Right ventricle myocardium superior (tissue), 1 donor: ENCODE measurements at regions of chr5 and their contacts with region 1.

Region 1: DNA sequence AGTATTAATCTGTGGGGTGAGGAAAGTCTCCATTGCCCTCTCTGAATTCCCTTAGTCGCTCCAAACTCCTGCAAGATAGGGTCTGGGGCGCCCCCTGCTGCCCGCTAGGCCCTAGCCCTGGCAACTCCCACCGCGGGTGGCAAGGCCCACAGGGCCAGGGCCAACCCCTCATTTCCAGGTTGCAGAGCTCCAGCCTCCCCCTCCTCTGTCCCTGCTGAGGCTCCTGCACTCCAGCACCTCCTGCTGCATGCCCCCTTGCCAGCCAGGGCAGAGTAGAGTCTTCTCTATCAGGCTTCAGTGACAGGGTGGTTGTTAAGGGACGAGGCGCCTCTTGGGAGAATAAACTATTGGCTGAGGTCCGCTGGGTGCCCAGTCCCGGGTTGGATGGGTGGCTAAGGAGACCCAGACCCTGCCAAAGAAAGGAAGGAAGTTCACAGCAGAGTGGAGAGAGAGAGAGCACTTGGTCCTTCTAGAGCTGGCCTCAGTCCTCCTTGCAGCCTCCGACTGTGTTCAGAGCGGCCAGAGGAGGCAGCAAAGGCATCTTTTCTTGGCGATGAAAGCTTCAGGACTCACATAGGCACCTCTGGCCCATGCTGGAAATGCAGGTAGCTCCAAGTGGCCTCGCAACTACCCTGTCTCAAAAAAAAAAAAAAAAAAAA is 45.6 kb downstream of the SAR1B start:
- DNase-seq: peak; percentile 92
- ATAC-seq: peak; percentile 88

Region 2: GRCh38 chr5:134184155-134185135 is 402.6 kb before region 1 on chr5:
- intact Hi-C with region 1: loop called (anchors 10 kb)
- DNase-seq: peak; percentile 68
- ATAC-seq: peak; percentile 92

Region 3: DNA sequence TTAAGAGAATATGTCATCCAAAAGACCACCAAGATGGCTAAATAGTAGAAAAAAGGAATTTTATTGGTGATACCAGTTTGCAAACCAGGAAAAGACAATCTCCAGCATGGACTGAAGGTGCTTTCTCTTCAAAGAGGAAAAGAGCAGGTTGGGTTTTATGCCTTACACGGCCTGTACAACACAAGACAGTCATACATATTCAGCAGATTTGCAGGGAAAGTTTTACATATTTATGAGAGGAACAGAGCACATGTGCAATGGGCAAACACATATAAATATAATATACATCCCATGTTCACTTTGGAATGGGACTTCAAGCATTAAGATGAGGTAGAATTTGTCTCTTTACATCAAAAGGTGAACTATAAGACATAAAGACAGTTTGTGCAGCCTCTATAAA is 290.8 kb before region 1 on chr5:
- intact Hi-C with region 1: loop called (anchors 2 kb)
- DNase-seq: no peak
- ATAC-seq: no peak

Region 4: GRCh38 chr5:134370871-134371833 is 215.8 kb before region 1 on chr5 and contains the start of gene UBE2B:
- intact Hi-C with region 1: loop called (anchors 10 kb)
- DNase-seq: peak; percentile 99
- ATAC-seq: peak; percentile 95
- total RNA-seq, gene UBE2B: 236 TPM

Region 5: DNA sequence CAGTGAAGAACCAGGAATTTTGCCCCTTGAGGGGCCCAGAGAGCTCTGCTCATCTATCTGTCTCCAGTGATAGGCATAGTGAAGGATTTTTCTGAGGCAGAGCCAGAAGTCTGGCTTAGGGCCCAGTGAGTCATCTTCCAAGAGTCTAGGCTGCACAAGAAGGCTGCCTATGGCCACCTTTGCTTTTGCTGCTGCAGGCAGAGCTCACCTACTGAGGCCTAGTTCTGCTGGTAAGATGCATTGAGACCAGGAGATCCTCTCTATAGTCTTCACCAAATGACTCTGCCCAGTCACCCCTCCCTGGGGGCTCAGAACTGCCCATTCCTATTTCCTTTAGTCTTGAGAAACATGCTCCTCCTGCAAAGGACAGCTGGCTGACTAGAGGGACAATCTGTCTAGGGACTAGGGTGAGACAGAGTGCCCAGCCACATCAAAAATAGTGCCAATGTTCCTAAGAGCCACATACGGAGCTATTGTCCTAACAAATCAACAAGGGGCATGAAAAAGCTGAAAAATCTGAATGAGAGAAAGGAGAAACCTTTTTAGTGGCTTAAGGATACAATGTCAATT is 135.0 kb before region 1 on chr5:
- intact Hi-C with region 1: no loop called
- DNase-seq: peak; percentile 47
- ATAC-seq: peak; percentile 71

Region 6: GRCh38 chr5:134489227-134489944 is 97.6 kb before region 1 on chr5:
- intact Hi-C with region 1: no loop called
- DNase-seq: no peak
- ATAC-seq: no peak

Region 7: GRCh38 chr5:134511788-134512650 is 75.0 kb before region 1 on chr5:
- intact Hi-C with region 1: no loop called
- DNase-seq: peak; percentile 85
- ATAC-seq: peak; percentile 90